ENCODE measurements at regions of chr16 and their contacts with region 1.

Region 1: DNA sequence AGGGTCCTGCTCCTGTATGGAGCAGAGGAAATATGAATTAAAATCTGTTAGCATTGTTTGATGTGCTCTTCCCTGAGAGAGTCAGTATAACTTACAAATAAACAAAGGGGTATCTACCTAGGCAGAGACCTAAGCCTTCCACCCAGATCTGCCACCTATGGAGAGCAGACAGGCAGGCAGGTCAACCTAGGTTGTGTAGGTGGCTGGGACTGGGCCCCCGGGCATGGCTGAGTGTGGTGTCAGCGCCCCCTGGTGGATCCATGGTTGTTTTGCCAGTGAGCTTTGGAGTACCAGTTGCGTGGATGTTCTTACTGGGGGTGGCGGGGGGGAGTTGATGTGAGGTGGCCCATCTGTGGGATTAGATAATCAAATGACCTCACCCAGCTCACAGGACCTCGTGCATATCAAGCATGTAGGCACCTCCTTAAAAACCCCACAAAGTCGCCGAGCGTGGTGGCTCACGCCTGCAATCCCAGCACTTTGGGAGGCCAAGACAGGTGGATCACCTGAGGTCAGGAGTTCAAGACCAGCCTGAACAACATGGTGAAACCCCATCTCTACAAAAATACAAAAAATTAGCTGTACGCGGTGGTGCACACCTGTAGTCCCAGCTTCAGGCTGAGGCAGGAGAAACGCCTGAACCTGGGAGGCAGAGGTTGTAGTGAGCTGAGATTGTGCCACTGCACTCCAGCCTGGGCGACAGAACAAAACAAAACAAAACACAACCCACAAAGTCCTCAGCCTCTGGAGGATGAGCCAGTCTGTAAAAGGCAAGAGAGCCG is 17.6 kb downstream of the DUS2 start:
- DNase-seq: peak; percentile 83 to 84
- ATAC-seq: peak; percentile 89 to 96 (median 94)
- H3K4me3 ChIP-seq: no peak overlapping the region
- H3K27ac ChIP-seq: peak overlapping the region in 1 of 10 donors; percentile 69
- H3K4me1 ChIP-seq: peaks cover 0 to 45% (median 0%) of the 10 kb centered on the region in 9 donors
- H3K27me3 ChIP-seq: no peaks in the 10 kb centered on the region
- CTCF ChIP-seq: peak; percentile 73 to 88 (median 83)

Region 2: DNA sequence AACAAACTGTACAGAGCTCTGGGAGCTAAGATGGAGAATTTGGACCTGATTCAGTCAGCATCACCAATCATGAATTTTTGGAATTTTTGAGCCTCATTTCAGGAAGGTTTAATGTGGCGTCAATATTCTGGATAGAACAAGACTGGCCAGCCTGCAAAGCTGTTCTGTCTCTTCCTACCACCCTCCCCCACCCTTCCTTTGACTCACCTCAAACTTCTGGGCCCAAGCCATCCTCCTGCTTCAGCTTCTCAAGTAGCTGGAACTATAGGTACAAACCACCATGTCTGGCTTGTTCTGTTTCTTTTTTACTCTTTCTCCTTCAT is 445.7 kb before region 1 on chr16:
- intact Hi-C with region 1: loop called in 1 of 10 experiments (anchors 5 kb)
- DNase-seq: no peak
- ATAC-seq: peak in 1 of 8 donors; percentile 35
- H3K4me3 ChIP-seq: no peak overlapping the region
- H3K27ac ChIP-seq: no peak overlapping the region
- H3K4me1 ChIP-seq: peaks cover 0 to 24% (median 10%) of the 10 kb centered on the region in 9 donors
- H3K27me3 ChIP-seq: no peaks in the 10 kb centered on the region
- CTCF ChIP-seq: no peak

Region 3: DNA sequence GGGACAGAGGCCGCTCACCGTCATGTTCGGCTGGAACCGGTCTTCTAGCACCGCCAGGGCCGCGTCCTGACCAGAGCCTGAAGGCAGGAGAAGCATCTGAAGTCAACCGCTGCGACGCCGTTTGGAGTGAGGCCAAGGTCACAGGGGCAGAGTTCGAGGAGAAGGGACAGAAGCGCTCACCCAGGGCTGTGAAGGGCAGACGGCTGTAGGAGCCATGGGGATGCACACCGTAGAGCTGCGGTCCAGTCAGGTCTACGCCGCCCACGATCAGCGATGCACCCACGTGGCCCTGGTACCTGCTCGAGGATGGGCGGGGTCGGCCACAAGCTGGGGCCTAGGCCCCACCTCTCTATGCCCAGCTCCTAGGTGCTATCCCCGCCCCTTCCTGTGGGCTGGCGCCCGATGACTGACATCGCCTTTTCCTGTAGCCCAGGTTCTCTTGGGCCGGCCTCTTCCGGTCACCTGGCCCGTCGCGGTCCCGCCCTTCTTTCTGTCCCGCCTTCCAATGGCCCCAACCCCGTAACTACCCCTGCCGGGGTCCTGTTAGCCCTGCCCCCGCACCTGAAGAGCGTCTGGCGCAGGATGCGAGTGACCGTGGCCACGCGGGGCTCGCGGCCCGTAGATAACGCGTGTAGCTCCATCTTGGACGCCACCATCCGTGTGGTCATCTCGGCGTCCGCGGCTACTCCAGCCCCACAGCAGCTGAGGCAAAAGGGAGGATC is 105.1 kb before region 1 on chr16:
- intact Hi-C with region 1: loop called in 4 of 10 experiments (anchors 2 to 10 kb)
- DNase-seq: peak; percentile 92 to 94
- ATAC-seq: peak; percentile 90 to 95 (median 92)
- H3K4me3 ChIP-seq: peak overlapping the region; percentile 70 to 96 (median 86)
- H3K27ac ChIP-seq: peak overlapping the region; percentile 70 to 98 (median 95)
- H3K4me1 ChIP-seq: peaks cover 4 to 40% (median 33%) of the 10 kb centered on the region in 9 donors
- H3K27me3 ChIP-seq: no peaks in the 10 kb centered on the region
- CTCF ChIP-seq: peak in 1 of 9 donors; percentile 5